WTC11 (cell line): ENCODE measurements at regions of chr16 and their contacts with region 1.

Region 1: GRCh38 chr16:74813109-74813641 is 38.6 kb upstream of the FA2H start:
- DNase-seq: peak; percentile 96
- ATAC-seq: peak; percentile 98
- H3K4me3 Mint-ChIP-seq: no peak overlapping the region
- H3K27ac Mint-ChIP-seq: no peak overlapping the region
- H3K4me1 Mint-ChIP-seq: peaks cover 36% of the 10 kb centered on the region
- H3K27me3 Mint-ChIP-seq: peaks cover 32% of the 10 kb centered on the region
- CTCF ChIP-seq: peak; percentile 91

Region 2: DNA sequence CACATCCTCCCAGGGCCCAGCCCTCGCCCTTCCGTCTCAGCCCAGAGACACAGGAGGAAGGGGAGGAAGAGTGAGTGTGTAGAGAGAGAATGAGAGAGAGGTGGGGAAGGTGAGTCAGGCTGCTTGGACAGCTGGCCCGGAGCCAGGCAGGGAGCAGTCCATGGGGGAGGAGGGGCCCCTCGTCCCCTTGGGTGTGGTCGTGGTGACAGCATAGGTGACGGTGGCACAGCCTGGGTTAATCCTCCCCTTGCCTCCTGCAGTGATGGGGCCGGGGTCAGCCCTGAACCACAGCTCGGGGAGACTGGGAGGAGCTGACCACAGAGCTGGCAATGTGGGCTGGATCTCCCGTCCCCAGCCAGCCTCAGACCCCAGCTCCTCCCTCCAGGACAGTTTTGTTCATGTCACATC is 75.0 kb before region 1 on chr16:
- CTCF ChIA-PET with region 1: interaction called, 14 read pairs
- POLR2A ChIA-PET with region 1: no interaction called
- DNase-seq: no peak
- ATAC-seq: no peak
- H3K4me3 Mint-ChIP-seq: no peak overlapping the region
- H3K27ac Mint-ChIP-seq: no peak overlapping the region
- H3K4me1 Mint-ChIP-seq: peaks cover 49% of the 10 kb centered on the region
- H3K27me3 Mint-ChIP-seq: no peaks in the 10 kb centered on the region
- CTCF ChIP-seq: no peak

Region 3: GRCh38 chr16:74830648-74831047 is 17.5 kb after region 1 on chr16:
- CTCF ChIA-PET with region 1: interaction called, 16 read pairs
- POLR2A ChIA-PET with region 1: no interaction called
- DNase-seq: no peak
- ATAC-seq: no peak
- H3K4me3 Mint-ChIP-seq: no peak overlapping the region
- H3K27ac Mint-ChIP-seq: no peak overlapping the region
- H3K4me1 Mint-ChIP-seq: peaks cover 6% of the 10 kb centered on the region; the same call in 1 of the 2 replicates
- H3K27me3 Mint-ChIP-seq: no peaks in the 10 kb centered on the region; the same call in 1 of the 2 replicates
- CTCF ChIP-seq: no peak